CD4-positive, alpha-beta memory T cell (primary cell): ENCODE measurements at regions of chr15 and their contacts with region 1.

Region 1: DNA sequence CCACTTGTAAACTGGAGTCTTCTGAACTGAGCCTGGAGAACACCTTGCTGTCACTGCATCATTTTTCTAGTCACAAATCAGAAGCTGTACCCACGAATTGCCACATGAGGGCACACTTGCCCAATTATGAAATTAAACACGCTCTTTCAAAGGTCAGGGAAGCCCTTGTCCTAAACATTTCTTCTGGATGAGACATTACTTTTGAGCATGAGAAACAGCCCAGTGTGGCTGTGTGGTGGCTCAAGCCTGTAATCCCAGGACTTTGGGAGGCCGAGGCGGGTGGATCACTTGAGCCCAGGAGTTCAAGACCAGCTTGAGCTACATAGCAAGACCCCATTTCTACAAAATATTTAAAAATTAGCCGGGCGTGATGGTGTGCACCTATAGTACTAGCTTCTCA is 27.5 kb upstream of the CFAP161 start:
- DNase-seq: peak in 4 of 5 donors; percentile 25 to 35 (median 28)
- H3K4me3 ChIP-seq: no peak overlapping the region
- H3K4me3 Mint-ChIP-seq: no peak overlapping the region
- H3K27ac ChIP-seq: no peak overlapping the region
- H3K27ac Mint-ChIP-seq: peak overlapping the region in 1 of 7 donors; percentile 14
- H3K4me1 ChIP-seq: no peaks in the 10 kb centered on the region
- H3K4me1 Mint-ChIP-seq: no peaks in the 10 kb centered on the region
- H3K27me3 ChIP-seq: no peaks in the 10 kb centered on the region
- H3K27me3 Mint-ChIP-seq: peaks cover 17 to 20% of the 10 kb centered on the region in 2 donors

Region 2: GRCh38 chr15:80455668-80456442 is 650.7 kb before region 1 on chr15:
- CTCF ChIA-PET with region 1: interaction called, 5 read pairs
- POLR2A ChIA-PET with region 1: no interaction called
- intact Hi-C with region 1: loop called (anchors 5 kb)
- DNase-seq: peak in 4 of 5 donors; percentile 52 to 55 (median 54)
- H3K4me3 ChIP-seq: no peak overlapping the region
- H3K4me3 Mint-ChIP-seq: peak overlapping the region in 1 of 8 donors; percentile 25
- H3K27ac ChIP-seq: no peak overlapping the region
- H3K27ac Mint-ChIP-seq: no peak overlapping the region
- H3K4me1 ChIP-seq: no peaks in the 10 kb centered on the region
- H3K4me1 Mint-ChIP-seq: peaks cover 0 to 6% (median 1%) of the 10 kb centered on the region in 4 donors
- H3K27me3 ChIP-seq: peaks cover 3% of the 10 kb centered on the region
- H3K27me3 Mint-ChIP-seq: peaks cover 8 to 17% of the 10 kb centered on the region in 2 donors

Region 3: GRCh38 chr15:80977627-80978036 is 128.9 kb before region 1 on chr15:
- CTCF ChIA-PET with region 1: interaction called, 24 read pairs
- POLR2A ChIA-PET with region 1: no interaction called
- intact Hi-C with region 1: loop called (anchors 1 kb)
- DNase-seq: peak in 1 of 5 donors; percentile 29
- H3K4me3 ChIP-seq: no peak overlapping the region
- H3K4me3 Mint-ChIP-seq: no peak overlapping the region
- H3K27ac ChIP-seq: no peak overlapping the region
- H3K27ac Mint-ChIP-seq: peak overlapping the region; percentile 5 to 85 (median 80)
- H3K4me1 ChIP-seq: peaks cover 16% of the 10 kb centered on the region
- H3K4me1 Mint-ChIP-seq: peaks cover 30 to 53% (median 39%) of the 10 kb centered on the region in 4 donors
- H3K27me3 ChIP-seq: no peaks in the 10 kb centered on the region
- H3K27me3 Mint-ChIP-seq: no peaks in the 10 kb centered on the region

Region 4: DNA sequence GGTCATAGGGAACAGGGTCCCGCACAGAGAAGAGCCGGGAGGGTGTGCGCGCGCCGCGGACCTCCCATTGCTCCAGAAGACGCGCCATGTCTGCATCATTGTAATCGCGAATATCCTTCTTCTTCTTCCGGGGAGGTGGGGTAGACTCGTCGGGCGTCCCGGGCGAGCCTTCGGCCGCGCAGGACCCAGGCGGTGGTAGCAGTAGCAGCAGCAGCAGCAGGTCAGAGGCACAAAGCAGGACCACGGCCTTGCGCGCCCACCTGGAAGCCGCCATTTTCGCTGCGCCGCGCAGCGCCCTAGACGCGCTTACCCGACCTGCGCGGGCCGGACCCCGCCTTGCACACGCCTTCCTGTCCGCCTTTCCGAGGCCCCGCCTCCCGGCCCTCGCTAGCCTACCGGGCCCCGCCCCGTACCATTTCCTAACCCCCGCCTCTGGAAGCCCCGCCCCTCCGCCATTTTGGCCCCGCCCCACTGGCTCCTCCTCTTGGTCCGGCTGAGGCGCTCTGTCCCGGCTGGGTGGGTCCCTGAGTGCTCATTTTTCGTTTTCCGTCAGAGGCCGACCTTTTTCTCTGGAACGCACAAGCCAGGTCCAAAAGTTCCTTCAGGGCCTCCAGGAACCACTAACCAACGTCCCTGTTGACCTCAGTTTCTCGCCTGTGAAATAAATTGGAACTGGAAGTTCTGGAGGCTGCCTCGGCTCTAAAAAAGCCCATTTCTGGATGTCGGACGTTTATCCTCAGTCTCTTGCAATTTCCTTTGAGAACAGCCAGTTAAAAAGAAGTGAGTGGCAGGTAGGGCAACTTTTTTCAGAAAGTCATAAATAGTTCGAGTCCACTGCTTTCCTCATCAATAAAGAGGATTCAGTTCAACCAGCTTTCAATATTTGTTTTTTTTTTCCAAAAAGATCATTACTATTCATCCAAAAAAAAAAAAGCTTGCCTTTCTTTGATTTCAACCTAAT is 116.8 kb before region 1 on chr15 and contains the start of gene MESD:
- CTCF ChIA-PET with region 1: interaction called, 42 read pairs
- POLR2A ChIA-PET with region 1: no interaction called
- intact Hi-C with region 1: no loop called
- DNase-seq: peak; percentile 92 to 95 (median 94)
- H3K4me3 ChIP-seq: peak within 1 kb of the TSS; percentile 54 to 97
- H3K4me3 Mint-ChIP-seq: peak within 1 kb of the TSS; percentile 91 to 99 (median 99)
- H3K27ac ChIP-seq: peak within 1 kb of the TSS; percentile 79
- H3K27ac Mint-ChIP-seq: peak within 1 kb of the TSS; percentile 95 to 99 (median 99)
- H3K4me1 ChIP-seq: peaks cover 60% of the 10 kb centered on the region
- H3K4me1 Mint-ChIP-seq: peaks cover 38 to 71% (median 56%) of the 10 kb centered on the region in 4 donors
- H3K27me3 ChIP-seq: no peaks in the 10 kb centered on the region
- H3K27me3 Mint-ChIP-seq: no peaks in the 10 kb centered on the region
- total RNA-seq, gene MESD: 43.3 to 44.6 TPM

Region 5: DNA sequence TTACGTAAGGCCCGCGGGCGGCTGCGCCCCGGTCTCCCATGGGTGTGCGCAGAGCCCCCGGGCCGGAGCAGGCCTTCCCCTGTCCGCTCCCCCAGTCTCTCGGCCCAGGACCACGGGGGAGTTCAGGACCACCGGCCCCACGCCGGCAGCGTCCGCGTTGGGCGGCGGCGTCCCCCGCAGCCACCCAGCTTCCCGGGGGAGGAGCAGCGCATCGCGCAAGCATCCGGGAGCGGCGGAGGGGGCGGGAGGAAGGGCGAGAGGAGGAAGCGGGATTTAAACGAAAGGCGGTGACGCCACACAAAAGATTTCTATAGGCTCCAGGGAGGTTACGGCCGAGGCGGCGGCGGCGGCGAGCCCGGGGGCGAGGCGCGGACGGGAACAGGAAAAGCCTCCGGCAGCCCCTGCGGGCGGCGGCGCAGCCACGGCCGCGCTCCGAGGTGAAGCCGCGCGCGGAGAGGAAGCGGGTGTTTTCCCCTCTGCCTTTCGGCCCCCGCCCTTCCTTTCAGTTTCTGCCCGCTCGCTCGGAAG is 105.9 kb before region 1 on chr15 and contains the start of gene TLNRD1:
- CTCF ChIA-PET with region 1: interaction called, 42 read pairs
- POLR2A ChIA-PET with region 1: no interaction called
- intact Hi-C with region 1: loop called (anchors 1 kb)
- DNase-seq: peak; percentile 85 to 89 (median 87)
- H3K4me3 ChIP-seq: peak within 1 kb of the TSS; percentile 39 to 91
- H3K4me3 Mint-ChIP-seq: peak within 1 kb of the TSS; percentile 93 to 98 (median 96)
- H3K27ac ChIP-seq: peak within 1 kb of the TSS; percentile 95
- H3K27ac Mint-ChIP-seq: peak within 1 kb of the TSS; percentile 97 to 99 (median 98)
- H3K4me1 ChIP-seq: peaks cover 42% of the 10 kb centered on the region
- H3K4me1 Mint-ChIP-seq: peaks cover 34 to 63% (median 53%) of the 10 kb centered on the region in 4 donors
- H3K27me3 ChIP-seq: no peaks in the 10 kb centered on the region
- H3K27me3 Mint-ChIP-seq: peaks cover 0 to 1% of the 10 kb centered on the region in 2 donors
- total RNA-seq, gene TLNRD1: 29.7 to 29.8 TPM

Region 6: DNA sequence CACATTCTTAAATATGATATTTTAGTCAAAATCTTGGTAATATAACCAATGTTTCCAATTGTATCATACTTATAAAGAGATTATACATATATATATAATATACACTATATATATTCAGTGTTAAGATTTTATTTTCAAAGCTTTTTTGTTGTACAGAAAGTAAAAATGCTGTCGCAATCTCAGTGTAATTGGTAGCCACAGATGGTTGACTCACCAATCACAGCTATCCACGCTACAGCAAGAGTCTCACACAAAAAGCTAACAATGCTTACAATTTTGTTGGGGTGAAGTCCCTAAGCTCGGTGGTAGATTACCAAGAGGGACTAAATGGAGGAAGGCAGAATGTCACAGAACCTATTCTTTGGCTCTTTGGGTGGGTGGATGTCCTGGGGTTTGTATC is 10.6 kb after region 1 on chr15:
- CTCF ChIA-PET with region 1: interaction called, 10 read pairs
- POLR2A ChIA-PET with region 1: no interaction called
- intact Hi-C with region 1: no loop called
- DNase-seq: no peak
- H3K4me3 ChIP-seq: no peak overlapping the region
- H3K4me3 Mint-ChIP-seq: no peak overlapping the region
- H3K27ac ChIP-seq: no peak overlapping the region
- H3K27ac Mint-ChIP-seq: no peak overlapping the region
- H3K4me1 ChIP-seq: peaks cover 4% of the 10 kb centered on the region
- H3K4me1 Mint-ChIP-seq: no peaks in the 10 kb centered on the region
- H3K27me3 ChIP-seq: peaks cover 8% of the 10 kb centered on the region
- H3K27me3 Mint-ChIP-seq: peaks cover 30 to 34% of the 10 kb centered on the region in 2 donors